HCT116 (cell line): ENCODE measurements at regions of chr2 and their contacts with region 1.

Region 1: DNA sequence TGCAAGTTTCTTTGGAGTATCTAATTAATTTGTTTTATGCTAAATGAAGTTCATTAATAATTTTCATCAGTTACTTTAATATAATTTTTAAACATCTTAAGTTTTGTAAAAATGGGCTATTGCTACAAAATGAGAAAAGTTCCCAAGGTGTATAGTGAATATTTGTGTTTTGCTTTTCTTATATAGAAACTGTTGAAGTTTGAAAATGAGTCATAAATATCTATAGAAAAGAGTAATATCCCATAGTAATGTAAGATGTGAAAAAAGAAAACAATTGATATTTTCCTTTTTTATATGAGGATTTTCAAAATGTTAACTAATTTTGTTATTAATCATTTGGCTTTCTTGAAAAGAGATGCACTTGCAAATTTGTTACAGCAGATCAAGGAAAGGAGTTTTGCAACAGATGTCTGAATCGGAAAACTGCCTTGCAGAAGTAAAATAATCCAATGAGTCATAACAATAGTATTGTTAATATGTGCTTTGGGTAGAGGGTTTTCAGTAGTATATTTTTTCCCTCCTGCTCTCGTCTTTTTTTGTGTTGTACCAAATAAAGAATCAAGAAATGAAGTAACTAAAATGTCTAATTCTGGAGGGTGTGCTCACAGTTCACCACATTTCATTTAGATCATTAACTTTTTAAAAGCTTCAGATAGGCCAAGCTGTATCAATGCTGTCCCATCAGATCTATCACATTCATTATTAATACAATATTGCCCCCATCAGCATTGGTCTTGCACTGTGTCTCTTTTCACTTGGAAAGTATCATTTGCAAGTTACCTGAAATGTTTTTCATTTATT is 15.5 kb downstream of the DUSP19 start:
- DNase-seq: no peak
- ATAC-seq: 0 out of 2 replicates have a peak, but pooled peaks have one; percentile 53
- H3K4me3 ChIP-seq: no peak overlapping the region
- H3K27ac ChIP-seq: no peak overlapping the region
- H3K4me1 ChIP-seq: no peaks in the 10 kb centered on the region
- H3K27me3 ChIP-seq: no peaks in the 10 kb centered on the region
- CTCF ChIP-seq: peak in 1 of 3 experiments; percentile 23; a peak in 2 of 6 replicates
- POLR2A ChIP-seq: no peak
- RAD21 ChIP-seq: peak; percentile 47

Region 2: DNA sequence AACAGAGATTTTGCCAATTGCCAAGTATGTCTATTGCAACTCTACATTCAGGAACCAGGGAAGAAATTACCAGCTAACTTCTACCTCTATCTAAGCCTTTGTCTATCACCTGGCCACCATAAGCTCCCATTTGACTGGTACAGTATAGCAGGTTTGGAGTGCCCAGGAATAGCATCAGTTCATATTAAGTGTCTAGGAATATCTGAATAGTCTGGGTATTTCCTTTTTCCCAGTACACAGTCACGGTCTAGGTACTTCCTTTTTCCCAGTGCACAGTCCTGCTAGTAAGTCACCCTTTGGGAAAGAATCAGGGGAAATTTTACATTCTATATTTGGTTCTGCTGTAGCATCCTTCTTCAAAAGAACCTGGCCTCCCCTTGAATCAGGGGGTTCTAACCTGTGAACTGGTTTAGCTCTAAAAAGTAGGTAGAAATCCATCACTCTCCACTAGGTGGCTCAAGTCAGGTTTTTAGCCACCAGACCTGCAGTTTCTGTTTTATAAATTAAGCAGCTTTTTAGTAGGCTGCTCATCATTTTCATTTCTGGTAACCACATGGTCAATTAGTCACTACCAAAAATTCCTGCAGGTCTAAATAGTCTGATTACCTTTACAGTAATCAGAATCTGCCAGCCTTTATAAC is 427.3 kb before region 1 on chr2:
- CTCF ChIA-PET with region 1: interaction called, 4 read pairs
- POLR2A ChIA-PET with region 1: no interaction called
- RAD21 ChIA-PET with region 1: no interaction called
- intact Hi-C with region 1: loop called (anchors 5 kb)
- DNase-seq: peak; percentile 18
- ATAC-seq: peak; percentile 80
- H3K4me3 ChIP-seq: no peak overlapping the region
- H3K27ac ChIP-seq: no peak overlapping the region
- H3K4me1 ChIP-seq: no peaks in the 10 kb centered on the region
- H3K27me3 ChIP-seq: no peaks in the 10 kb centered on the region
- CTCF ChIP-seq: peak; percentile 31 to 75 (median 51); a peak in 5 of 6 replicates
- POLR2A ChIP-seq: no peak
- RAD21 ChIP-seq: peak; percentile 48